ENCODE measurements at regions of chr11 and their contacts with region 1.

Region 1: DNA sequence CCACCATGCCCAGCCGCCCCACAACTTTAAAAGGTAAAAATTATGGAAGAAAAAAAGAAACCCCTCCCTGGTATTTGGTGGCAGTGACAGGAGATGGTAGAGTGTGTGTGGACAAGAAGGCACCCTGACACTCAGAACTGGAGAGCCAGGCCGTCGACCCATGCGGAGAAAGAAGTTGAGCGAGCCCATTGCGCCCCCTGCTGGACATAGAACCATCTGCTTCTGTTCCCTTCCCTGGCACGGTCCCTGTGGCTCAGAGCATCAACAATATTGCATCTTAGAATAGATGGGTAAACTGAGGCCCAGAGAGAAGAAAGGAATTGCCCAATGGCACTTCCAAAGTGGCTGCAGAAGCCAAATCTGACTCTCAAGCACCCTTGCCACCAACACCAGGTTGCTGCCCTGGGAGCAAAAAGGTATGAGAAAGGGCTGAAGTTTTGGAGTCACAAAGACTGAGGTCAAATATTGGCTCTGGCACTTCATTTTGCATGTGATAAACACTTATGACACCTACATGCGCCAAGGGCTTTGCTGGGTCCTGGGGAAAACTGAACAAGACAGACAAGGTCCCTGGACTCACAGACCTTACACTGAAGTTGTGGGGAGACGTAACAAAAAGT is 8.6 kb downstream of the MRPL11 start:
- DNase-seq: peak; percentile 44
- ATAC-seq: peak; percentile 96
- H3K4me3 ChIP-seq: no peak overlapping the region
- H3K27ac ChIP-seq: no peak overlapping the region
- H3K4me1 ChIP-seq: no peaks in the 10 kb centered on the region; a peak in 1 of 4 replicates
- H3K27me3 ChIP-seq: no peaks in the 10 kb centered on the region
- CTCF ChIP-seq: peak; percentile 89 to 98 (median 95)
- POLR2A ChIP-seq: no peak
- RAD21 ChIP-seq: peak; percentile 91

Region 2: GRCh38 chr11:66317723-66318599 is 112.1 kb before region 1 on chr11:
- CTCF ChIA-PET with region 1: no interaction called
- POLR2A ChIA-PET with region 1: no interaction called
- RAD21 ChIA-PET with region 1: no interaction called
- intact Hi-C with region 1: no loop called
- DNase-seq: no peak
- ATAC-seq: no peak
- H3K4me3 ChIP-seq: no peak overlapping the region
- H3K27ac ChIP-seq: no peak overlapping the region
- H3K4me1 ChIP-seq: peaks cover 10 to 11% of the 10 kb centered on the region in 2 experiments
- H3K27me3 ChIP-seq: no peaks in the 10 kb centered on the region
- CTCF ChIP-seq: no peak
- POLR2A ChIP-seq: no peak
- RAD21 ChIP-seq: no peak

Region 3: GRCh38 chr11:66408488-66409214 is 21.4 kb before region 1 on chr11:
- CTCF ChIA-PET with region 1: interaction called, 5 read pairs
- POLR2A ChIA-PET with region 1: no interaction called
- RAD21 ChIA-PET with region 1: interaction called in 1 of 2 experiments, 5 read pairs
- intact Hi-C with region 1: loop called (anchors 1 kb)
- DNase-seq: peak; percentile 62
- ATAC-seq: peak; percentile 92
- H3K4me3 ChIP-seq: peak overlapping the region; percentile 26 to 45; a peak in 3 of 4 replicates
- H3K27ac ChIP-seq: no peak overlapping the region
- H3K4me1 ChIP-seq: peaks cover 0 to 3% of the 10 kb centered on the region in 2 experiments; a peak in 1 of 4 replicates
- H3K27me3 ChIP-seq: peaks cover 16% of the 10 kb centered on the region; the same call in 1 of the 2 replicates
- CTCF ChIP-seq: peak; percentile 99 to 100 (median 100)
- POLR2A ChIP-seq: no peak
- RAD21 ChIP-seq: peak; percentile 99